Sciatic nerve (tissue), 2 donors: ENCODE measurements at regions of chr4 and their contacts with region 1.

Region 1: DNA sequence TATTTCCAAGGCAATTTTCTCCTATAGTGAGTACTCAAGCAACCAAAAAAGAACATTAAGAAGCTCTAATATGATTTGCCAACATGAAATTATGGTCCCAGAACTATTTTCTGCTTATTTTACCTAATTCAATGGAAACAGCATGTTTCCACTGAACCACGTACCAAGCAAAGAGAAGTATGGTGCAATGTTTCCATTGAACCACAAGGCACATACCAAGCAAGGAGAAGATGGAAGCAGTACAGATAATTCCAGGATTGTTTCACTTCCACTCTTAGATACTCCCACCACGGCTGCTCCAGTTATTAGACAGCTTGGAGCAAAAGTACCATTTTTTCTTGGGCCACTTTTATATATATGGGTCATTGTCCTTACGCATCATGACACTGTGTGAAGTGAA is 164.9 kb downstream of the RNF150 start:
- DNase-seq: no peak
- ATAC-seq: no peak

Region 2: GRCh38 chr4:140743194-140743931 is 225.0 kb before region 1 on chr4:
- intact Hi-C with region 1: no loop called
- DNase-seq: no peak
- ATAC-seq: peak; percentile 51

Region 3: DNA sequence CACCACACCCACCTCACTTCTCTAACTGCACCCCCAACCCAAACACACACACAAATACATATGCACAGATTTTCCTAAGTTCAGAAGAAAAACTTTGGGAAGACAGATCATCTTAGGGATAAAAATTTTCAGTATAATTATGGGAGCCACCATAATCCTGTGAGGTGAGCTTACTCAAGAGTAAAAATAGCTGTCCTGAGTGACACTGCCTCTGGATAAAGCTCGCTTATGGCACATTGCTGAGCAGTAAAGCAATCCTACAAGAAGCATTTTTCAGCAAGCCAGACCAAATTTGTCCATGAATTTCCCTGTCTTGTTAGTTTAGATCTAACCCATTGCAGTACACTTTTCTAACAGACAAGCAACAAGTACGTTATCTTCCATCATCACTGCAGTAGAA is 1793.9 kb after region 1 on chr4:
- intact Hi-C with region 1: loop called (anchors 5 kb)
- DNase-seq: no peak
- ATAC-seq: no peak